Right lobe of liver (tissue), 6 donors: ENCODE measurements at regions of chr2 and their contacts with region 1.

Region 1: DNA sequence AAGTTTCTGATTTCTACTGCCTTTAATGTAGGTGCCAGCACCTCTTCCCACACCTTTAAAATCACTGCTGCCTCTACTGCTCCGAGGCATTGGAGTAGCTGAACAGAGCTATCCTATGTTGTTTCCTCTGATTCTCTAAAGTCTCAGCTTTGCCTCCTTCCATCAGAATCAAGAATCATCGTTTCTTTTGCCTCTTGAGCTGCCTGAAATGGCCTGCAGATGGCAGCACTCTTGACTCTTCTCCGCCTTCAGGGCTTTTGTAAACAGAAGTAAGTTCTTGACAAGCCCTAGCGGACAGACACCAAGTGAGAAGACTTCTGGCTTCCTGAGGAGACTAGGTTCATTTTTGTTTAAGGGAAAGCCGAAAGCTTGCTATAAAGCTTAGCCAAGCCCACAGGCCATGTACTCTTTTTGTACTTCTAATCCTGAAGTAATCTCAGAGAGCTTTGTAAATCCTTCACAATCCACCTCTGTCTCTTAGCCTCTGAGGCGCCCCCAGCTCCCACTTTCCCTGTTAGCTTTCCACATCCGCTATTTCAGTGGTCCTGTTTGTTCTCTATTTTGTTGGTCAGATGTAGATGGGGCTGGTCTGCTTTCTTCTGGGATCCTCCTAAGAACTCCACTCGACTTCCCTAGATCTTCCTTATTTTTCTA is 48.4 kb downstream of the GTF3C3 start:
- DNase-seq: peak in 2 of 3 donors; percentile 26 to 52
- ATAC-seq: peak; percentile 69 to 87 (median 76)
- H3K4me3 ChIP-seq: no peak overlapping the region
- H3K27ac ChIP-seq: no peak overlapping the region
- H3K4me1 ChIP-seq: peaks cover 0 to 11% (median 3%) of the 10 kb centered on the region in 4 donors
- H3K27me3 ChIP-seq: no peaks in the 10 kb centered on the region
- CTCF ChIP-seq: peak; percentile 63 to 71 (median 70)
- POLR2A ChIP-seq: no peak

Region 2: DNA sequence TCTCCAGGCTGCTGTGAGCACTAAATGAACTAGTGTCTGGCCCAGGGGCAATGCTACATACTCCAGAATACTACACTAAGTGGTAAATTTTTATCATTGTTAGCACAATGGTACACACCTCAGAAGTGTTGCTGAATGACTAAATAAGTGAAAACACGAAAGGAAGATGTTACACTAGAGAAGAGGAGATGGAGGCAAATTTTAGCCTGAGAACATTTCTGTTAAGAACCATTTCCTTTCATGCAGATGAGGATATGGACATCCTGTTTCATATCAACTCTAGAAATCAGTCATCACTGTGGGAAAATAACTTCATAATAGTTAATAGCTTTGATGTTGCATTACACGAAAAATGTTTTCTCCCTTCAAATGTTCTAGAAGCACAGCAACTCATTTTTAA is 462.1 kb before region 1 on chr2:
- intact Hi-C with region 1: loop called in 1 of 2 experiments (anchors 10 kb)
- DNase-seq: no peak
- ATAC-seq: no peak
- H3K4me3 ChIP-seq: no peak overlapping the region
- H3K27ac ChIP-seq: no peak overlapping the region
- H3K4me1 ChIP-seq: no peaks in the 10 kb centered on the region
- H3K27me3 ChIP-seq: no peaks in the 10 kb centered on the region
- CTCF ChIP-seq: no peak
- POLR2A ChIP-seq: no peak

Region 3: GRCh38 chr2:196544906-196545433 is 206.1 kb before region 1 on chr2:
- intact Hi-C with region 1: no loop called
- DNase-seq: no peak
- ATAC-seq: no peak
- H3K4me3 ChIP-seq: no peak overlapping the region
- H3K27ac ChIP-seq: no peak overlapping the region
- H3K4me1 ChIP-seq: no peaks in the 10 kb centered on the region
- H3K27me3 ChIP-seq: no peaks in the 10 kb centered on the region
- CTCF ChIP-seq: no peak
- POLR2A ChIP-seq: no peak

Region 4: DNA sequence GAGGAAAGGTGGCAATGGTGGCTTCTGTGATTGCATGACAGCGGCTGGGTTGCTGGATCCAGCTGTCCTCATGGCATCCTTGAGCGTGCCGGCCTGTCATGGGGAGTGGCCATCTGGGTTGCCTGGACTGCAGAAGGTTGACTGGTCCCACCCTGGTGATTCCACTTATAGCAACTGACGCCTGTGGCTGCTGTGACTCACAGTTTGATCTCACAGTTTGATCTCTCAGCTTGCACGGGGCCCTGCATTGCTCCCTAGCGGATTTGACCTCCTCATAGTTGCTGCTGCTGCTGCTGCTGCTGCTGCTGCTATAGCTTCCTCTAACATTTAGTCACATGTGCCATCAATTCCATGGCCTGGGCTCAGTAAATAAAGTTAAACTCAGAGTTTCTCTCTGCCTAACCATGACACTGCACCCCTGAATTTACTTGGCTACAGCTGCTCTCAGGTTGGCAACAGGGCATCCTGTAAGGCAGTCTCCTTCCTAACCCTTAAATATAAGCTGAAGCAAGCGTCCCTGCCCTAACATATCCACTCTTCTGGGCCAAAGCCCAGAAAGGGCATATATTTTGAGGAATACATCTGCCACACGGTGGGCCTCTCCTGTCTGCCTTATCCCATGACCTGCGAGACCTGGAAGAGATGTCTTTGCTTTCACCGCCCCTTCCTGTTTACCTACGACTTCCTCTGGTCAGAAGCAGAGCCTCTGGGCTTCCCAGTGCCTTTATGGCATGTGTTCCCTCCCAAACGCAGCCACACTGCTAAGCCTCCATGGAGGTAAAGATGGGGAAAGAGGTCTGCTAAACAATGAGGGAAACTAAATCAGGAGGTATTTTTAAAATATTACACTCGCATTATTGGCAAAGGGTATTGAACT is 149.4 kb before region 1 on chr2:
- intact Hi-C with region 1: no loop called
- DNase-seq: no peak
- ATAC-seq: no peak
- H3K4me3 ChIP-seq: no peak overlapping the region
- H3K27ac ChIP-seq: no peak overlapping the region
- H3K4me1 ChIP-seq: no peaks in the 10 kb centered on the region
- H3K27me3 ChIP-seq: no peaks in the 10 kb centered on the region
- CTCF ChIP-seq: no peak
- POLR2A ChIP-seq: no peak

Region 5: DNA sequence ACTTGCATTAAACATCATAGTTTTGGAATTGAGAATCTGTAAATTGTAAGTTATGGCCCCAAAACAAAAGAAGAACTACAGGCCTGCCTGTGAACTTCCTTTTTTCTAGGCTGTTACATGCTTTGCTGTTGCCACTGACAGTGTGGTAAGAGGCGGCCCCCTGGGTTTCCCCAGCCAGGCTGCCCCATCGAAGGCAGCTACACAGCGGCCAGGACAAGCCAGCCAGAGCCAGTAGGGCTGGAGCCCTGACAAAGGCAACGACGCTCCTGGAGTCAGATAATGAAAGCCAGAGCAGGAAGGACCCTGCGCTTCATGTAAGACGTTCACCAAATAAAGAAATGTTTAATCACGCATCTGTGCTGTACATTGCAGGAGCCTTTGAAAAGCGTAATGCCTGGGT is 504.4 kb after region 1 on chr2:
- intact Hi-C with region 1: no loop called
- DNase-seq: peak; percentile 62 to 82 (median 71)
- ATAC-seq: peak; percentile 82 to 95 (median 90)
- H3K4me3 ChIP-seq: no peak overlapping the region
- H3K27ac ChIP-seq: peak overlapping the region; percentile 5 to 18 (median 13)
- H3K4me1 ChIP-seq: no peaks in the 10 kb centered on the region
- H3K27me3 ChIP-seq: no peaks in the 10 kb centered on the region
- CTCF ChIP-seq: no peak
- POLR2A ChIP-seq: no peak